MCF 10A (cell line): ENCODE measurements at regions of chr12 and their contacts with region 1.

Region 1: GRCh38 chr12:63836936-63837335 is 7.6 kb upstream of the SRGAP1 start:
- DNase-seq: no peak
- H3K4me3 Mint-ChIP-seq: no peak overlapping the region
- H3K27ac Mint-ChIP-seq: no peak overlapping the region
- H3K4me1 Mint-ChIP-seq: no peaks in the 10 kb centered on the region
- H3K27me3 Mint-ChIP-seq: no peaks in the 10 kb centered on the region
- CTCF ChIP-seq: no peak

Region 2: DNA sequence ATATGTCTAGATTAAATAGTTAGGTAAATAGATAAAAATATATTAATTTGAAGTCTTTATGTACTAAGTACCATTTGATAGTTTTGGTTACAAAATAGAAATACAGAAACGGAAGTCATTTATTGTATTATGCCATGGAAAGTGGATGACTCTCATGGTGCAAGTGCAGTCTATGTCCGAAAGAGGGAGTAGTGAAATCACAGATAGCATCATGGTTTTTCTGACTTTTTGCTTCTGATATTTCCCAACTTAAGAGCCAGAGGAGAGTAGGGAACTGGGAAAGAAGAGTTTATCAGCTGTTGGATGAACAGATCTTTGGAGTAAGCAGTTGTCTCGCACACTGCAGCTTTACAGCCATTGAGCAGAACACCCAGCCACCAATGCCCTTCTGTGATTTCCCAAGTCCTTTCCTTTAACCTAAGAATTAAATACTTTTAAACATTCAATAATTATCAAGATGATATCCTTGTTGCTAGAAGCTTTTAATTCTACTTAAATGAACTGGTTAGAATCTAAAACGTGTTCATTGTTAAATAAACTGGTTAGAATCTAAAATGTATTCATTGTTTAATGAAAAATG is 10.8 kb before region 1 on chr12:
- CTCF ChIA-PET with region 1: interaction called, 12 read pairs
- POLR2A ChIA-PET with region 1: no interaction called
- intact Hi-C with region 1: no loop called
- DNase-seq: peak; percentile 76
- H3K4me3 Mint-ChIP-seq: no peak overlapping the region
- H3K27ac Mint-ChIP-seq: no peak overlapping the region
- H3K4me1 Mint-ChIP-seq: peaks cover 8% of the 10 kb centered on the region
- H3K27me3 Mint-ChIP-seq: no peaks in the 10 kb centered on the region
- CTCF ChIP-seq: peak; percentile 75

Region 3: DNA sequence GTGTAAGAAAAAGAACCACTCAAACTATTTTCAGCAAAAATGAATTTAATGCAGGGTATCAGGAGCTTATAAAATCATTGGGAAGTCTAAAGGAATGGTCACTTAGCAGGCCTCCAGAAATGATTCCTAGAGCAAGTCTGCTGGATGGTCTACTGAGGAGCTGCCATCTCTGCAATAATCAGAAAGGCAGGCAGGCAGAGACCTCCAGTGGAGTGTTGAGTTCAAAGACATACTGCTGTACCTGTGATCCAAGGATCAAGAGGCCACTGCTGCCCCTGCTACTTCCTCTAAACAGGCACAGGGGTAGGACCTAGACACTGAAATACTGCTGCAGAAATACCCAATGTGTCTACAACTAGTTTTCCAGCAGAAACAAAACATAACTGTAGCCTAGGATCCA is 399.6 kb after region 1 on chr12:
- CTCF ChIA-PET with region 1: interaction called, 14 read pairs
- POLR2A ChIA-PET with region 1: interaction called, 3 read pairs
- intact Hi-C with region 1: no loop called
- DNase-seq: peak; percentile 45
- H3K4me3 Mint-ChIP-seq: no peak overlapping the region
- H3K27ac Mint-ChIP-seq: no peak overlapping the region
- H3K4me1 Mint-ChIP-seq: peaks cover 6% of the 10 kb centered on the region
- H3K27me3 Mint-ChIP-seq: no peaks in the 10 kb centered on the region
- CTCF ChIP-seq: peak; percentile 37

Region 4: DNA sequence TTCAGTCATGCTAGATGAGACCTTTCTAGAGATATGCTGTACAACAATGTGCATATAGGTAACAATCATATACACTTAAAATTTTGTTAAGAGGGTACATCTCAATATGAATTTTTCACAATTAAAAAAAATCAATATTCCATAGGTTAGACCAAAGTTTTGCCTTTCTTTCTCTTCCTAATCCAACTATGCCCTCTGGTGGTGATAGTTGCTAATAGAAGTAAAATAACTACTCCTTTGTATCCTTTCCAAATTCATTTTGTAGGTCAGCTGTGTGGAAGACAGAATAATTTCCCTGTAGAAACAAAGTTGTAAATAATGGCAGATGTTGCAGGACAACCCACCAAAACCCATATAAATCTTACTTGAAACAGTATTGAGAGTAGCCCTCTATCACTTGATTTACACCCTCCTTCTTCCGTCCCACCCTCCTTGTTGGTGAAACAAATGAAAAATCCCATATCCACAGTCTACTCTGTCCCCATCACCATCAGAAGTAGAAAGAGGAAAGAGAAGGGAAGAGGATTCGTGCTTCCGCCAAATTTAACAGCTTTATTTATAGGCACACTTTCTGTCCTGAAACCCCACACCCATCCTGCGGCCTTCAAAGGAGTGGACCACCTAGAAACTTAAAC is 419.3 kb after region 1 on chr12:
- CTCF ChIA-PET with region 1: interaction called, 101 read pairs
- POLR2A ChIA-PET with region 1: interaction called, 4 read pairs
- intact Hi-C with region 1: loop called (anchors 1 kb)
- DNase-seq: peak; percentile 76
- H3K4me3 Mint-ChIP-seq: no peak overlapping the region
- H3K27ac Mint-ChIP-seq: no peak overlapping the region
- H3K4me1 Mint-ChIP-seq: peaks cover 10% of the 10 kb centered on the region
- H3K27me3 Mint-ChIP-seq: no peaks in the 10 kb centered on the region
- CTCF ChIP-seq: peak; percentile 68